ENCODE measurements at regions of chr5 and their contacts with region 1.

Region 1: DNA sequence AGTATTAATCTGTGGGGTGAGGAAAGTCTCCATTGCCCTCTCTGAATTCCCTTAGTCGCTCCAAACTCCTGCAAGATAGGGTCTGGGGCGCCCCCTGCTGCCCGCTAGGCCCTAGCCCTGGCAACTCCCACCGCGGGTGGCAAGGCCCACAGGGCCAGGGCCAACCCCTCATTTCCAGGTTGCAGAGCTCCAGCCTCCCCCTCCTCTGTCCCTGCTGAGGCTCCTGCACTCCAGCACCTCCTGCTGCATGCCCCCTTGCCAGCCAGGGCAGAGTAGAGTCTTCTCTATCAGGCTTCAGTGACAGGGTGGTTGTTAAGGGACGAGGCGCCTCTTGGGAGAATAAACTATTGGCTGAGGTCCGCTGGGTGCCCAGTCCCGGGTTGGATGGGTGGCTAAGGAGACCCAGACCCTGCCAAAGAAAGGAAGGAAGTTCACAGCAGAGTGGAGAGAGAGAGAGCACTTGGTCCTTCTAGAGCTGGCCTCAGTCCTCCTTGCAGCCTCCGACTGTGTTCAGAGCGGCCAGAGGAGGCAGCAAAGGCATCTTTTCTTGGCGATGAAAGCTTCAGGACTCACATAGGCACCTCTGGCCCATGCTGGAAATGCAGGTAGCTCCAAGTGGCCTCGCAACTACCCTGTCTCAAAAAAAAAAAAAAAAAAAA is 45.6 kb downstream of the SAR1B start:
- DNase-seq: peak; percentile 95
- H3K4me3 Mint-ChIP-seq: peak overlapping the region; percentile 51
- H3K27ac Mint-ChIP-seq: peak overlapping the region; percentile 84
- H3K4me1 Mint-ChIP-seq: peaks cover 16% of the 10 kb centered on the region
- H3K27me3 Mint-ChIP-seq: no peaks in the 10 kb centered on the region

Region 2: DNA sequence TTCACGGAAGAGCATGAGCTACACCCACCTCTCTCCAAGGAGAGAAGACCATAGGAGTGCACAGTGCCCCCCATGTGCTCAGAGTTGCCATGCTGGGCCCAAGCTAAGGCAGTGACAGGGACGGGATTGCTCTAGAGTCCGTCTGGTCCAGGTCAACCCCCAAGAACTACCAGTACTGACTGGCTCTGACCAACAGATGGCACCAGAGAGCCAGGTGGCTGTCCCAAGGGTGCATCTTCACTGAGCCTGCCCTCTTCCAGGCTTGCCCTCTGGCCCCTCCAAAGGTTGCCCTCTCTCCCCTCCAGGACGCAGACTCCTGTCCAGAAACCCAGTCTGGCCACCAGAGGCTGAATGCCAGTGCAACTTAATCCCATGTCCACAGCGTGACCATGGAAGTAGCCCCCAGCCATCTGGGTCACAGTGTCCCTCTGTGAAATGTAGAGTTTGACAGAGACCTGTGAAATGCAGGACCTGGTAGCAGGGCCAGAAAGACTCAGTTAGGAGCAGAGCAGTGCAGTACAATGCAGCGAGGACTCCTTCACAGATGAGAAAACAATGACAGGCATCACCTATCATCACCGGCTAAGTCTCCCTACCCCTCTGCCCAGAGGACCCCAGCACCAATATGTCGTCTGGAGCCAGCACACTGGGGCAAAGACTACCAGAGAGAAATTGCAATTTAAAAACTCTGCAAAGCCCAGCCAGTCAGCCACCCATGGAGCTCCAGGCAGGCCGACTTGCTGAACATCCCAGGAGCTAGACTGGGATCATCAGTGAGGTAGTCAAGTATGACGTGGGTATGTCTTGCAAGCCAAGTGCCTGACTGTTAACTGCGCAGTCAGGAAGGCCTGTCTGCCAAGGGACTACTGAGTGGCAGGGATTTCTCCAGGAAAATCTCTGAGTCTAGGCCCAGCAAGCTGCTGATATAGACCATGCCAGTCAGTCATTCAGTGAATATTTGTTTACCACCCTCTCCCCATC is 402.6 kb before region 1 on chr5:
- intact Hi-C with region 1: loop called (anchors 2 kb)
- DNase-seq: peak; percentile 94
- H3K4me3 Mint-ChIP-seq: no peak overlapping the region
- H3K27ac Mint-ChIP-seq: no peak overlapping the region
- H3K4me1 Mint-ChIP-seq: no peaks in the 10 kb centered on the region
- H3K27me3 Mint-ChIP-seq: peaks cover 4% of the 10 kb centered on the region

Region 3: GRCh38 chr5:134304311-134304710 is 282.7 kb before region 1 on chr5:
- intact Hi-C with region 1: loop called (anchors 1 kb)
- DNase-seq: no peak
- H3K4me3 Mint-ChIP-seq: no peak overlapping the region
- H3K27ac Mint-ChIP-seq: no peak overlapping the region
- H3K4me1 Mint-ChIP-seq: no peaks in the 10 kb centered on the region
- H3K27me3 Mint-ChIP-seq: peaks cover 6% of the 10 kb centered on the region

Region 4: DNA sequence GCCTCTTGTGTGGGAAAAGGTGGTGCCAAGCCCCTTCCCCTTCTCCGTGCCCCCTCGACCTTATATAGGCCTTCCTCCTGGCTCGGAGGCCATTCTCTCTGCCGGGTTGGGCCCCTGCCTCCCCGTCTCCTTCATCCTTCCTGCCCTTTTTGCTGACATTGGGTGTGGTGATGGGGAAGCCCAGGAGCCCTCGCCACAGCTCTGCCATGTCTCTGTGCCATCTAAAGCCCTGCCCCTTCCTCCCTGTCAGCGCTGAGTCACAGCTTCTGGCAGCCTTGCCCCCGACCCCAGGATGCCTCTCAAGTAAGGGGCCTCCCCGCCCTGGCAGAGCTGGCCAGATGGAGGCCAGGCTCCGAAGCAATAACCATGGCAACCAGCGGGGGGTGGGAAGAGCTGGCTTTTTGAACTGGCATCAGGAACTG is 31.1 kb before region 1 on chr5:
- intact Hi-C with region 1: loop called (anchors 1 kb)
- DNase-seq: peak; percentile 89
- H3K4me3 Mint-ChIP-seq: peak overlapping the region; percentile 80
- H3K27ac Mint-ChIP-seq: peak overlapping the region; percentile 97
- H3K4me1 Mint-ChIP-seq: peaks cover 33% of the 10 kb centered on the region
- H3K27me3 Mint-ChIP-seq: no peaks in the 10 kb centered on the region